Calu3 (cell line): ENCODE measurements at regions of chr12 and their contacts with region 1.

Region 1: GRCh38 chr12:53321074-53321814 is at the start of gene AAAS:
- DNase-seq: peak; percentile 90
- H3K4me3 Mint-ChIP-seq: peak within 1 kb of the TSS; percentile 82
- H3K27ac Mint-ChIP-seq: peak within 1 kb of the TSS; percentile 73
- H3K4me1 Mint-ChIP-seq: peaks cover 12% of the 10 kb centered on the region
- H3K27me3 Mint-ChIP-seq: no peaks in the 10 kb centered on the region
- CTCF ChIP-seq: peak; percentile 91
- total RNA-seq, gene AAAS: 31.0 and 33.6 TPM in 2 replicates

Region 2: GRCh38 chr12:53344824-53345485 is 23.7 kb after region 1 on chr12:
- CTCF ChIA-PET with region 1: interaction called, 15 read pairs
- intact Hi-C with region 1: no loop called
- DNase-seq: peak; percentile 69
- H3K4me3 Mint-ChIP-seq: peak overlapping the region; percentile 85
- H3K27ac Mint-ChIP-seq: peak overlapping the region; percentile 40
- H3K4me1 Mint-ChIP-seq: no peaks in the 10 kb centered on the region
- H3K27me3 Mint-ChIP-seq: peaks cover 58% of the 10 kb centered on the region
- CTCF ChIP-seq: peak; percentile 43

Region 3: DNA sequence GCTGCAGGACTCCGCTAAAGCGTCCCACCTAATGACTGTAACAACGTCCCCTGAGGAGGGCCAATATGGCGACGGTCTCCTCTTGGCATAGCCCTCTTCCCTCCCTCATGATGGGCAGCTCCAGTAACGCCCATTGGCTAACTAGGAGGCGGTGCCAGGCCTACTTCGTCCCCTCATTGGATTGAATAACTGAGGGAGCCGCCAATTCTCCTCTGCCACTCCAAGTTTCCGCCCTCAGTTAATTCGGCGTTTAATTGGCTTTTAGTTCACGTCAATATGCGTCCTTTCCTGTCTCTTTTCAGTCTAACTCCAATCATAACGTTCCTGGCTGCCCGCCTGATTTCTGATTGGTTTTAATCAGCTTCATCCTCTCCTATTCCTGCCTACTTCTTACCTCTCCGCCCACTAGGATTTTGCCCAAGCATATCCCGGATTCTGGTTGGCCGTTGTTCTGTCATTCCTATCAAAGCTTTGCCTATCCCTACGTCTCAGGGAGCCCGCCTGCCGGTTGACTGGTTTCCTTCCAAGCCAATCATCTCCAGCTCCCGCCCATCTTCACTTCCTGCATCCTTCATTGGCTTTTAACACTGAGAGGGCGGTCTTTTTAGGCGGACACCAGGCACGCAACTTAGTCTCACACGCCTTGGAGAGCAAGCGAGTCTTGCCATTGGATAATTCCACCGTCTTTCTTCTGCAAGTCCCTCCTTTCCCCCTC is 58.3 kb after region 1 on chr12:
- CTCF ChIA-PET with region 1: interaction called, 11 read pairs
- intact Hi-C with region 1: no loop called
- DNase-seq: peak; percentile 95
- H3K4me3 Mint-ChIP-seq: no peak overlapping the region
- H3K27ac Mint-ChIP-seq: no peak overlapping the region
- H3K4me1 Mint-ChIP-seq: peaks cover 15% of the 10 kb centered on the region
- H3K27me3 Mint-ChIP-seq: no peaks in the 10 kb centered on the region
- CTCF ChIP-seq: no peak

Region 4: GRCh38 chr12:53419761-53420160 is 98.5 kb after region 1 on chr12:
- CTCF ChIA-PET with region 1: interaction called, 21 read pairs
- intact Hi-C with region 1: no loop called
- DNase-seq: no peak
- H3K4me3 Mint-ChIP-seq: no peak overlapping the region
- H3K27ac Mint-ChIP-seq: no peak overlapping the region
- H3K4me1 Mint-ChIP-seq: peaks cover 19% of the 10 kb centered on the region
- H3K27me3 Mint-ChIP-seq: no peaks in the 10 kb centered on the region
- CTCF ChIP-seq: no peak

Region 5: GRCh38 chr12:53500776-53501614 is 179.8 kb after region 1 on chr12 and contains the start of gene TARBP2:
- CTCF ChIA-PET with region 1: interaction called, 11 read pairs
- intact Hi-C with region 1: loop called (anchors 5 kb)
- DNase-seq: peak; percentile 93
- H3K4me3 Mint-ChIP-seq: peak within 1 kb of the TSS; percentile 76
- H3K27ac Mint-ChIP-seq: peak within 1 kb of the TSS; percentile 62
- H3K4me1 Mint-ChIP-seq: peaks cover 25% of the 10 kb centered on the region
- H3K27me3 Mint-ChIP-seq: peaks cover 10% of the 10 kb centered on the region
- CTCF ChIP-seq: no peak
- total RNA-seq, gene TARBP2: 20.7 and 21.8 TPM in 2 replicates

Region 6: GRCh38 chr12:53508534-53509199 is 187.4 kb after region 1 on chr12:
- CTCF ChIA-PET with region 1: interaction called, 8 read pairs
- intact Hi-C with region 1: loop called (anchors 5 kb)
- DNase-seq: peak; percentile 82
- H3K4me3 Mint-ChIP-seq: no peak overlapping the region
- H3K27ac Mint-ChIP-seq: no peak overlapping the region
- H3K4me1 Mint-ChIP-seq: no peaks in the 10 kb centered on the region
- H3K27me3 Mint-ChIP-seq: no peaks in the 10 kb centered on the region
- CTCF ChIP-seq: peak; percentile 66